ENCODE measurements at regions of chr1 and their contacts with region 1.

Region 1: GRCh38 chr1:74733604-74734484 is 892 bp downstream of the TYW3 start:
- DNase-seq: peak; percentile 49
- H3K4me3 ChIP-seq: peak overlapping the region; percentile 61 to 80
- H3K27ac ChIP-seq: peak overlapping the region; percentile 80 to 82
- H3K4me1 ChIP-seq: no peaks in the 10 kb centered on the region
- H3K27me3 ChIP-seq: no peaks in the 10 kb centered on the region
- CTCF ChIP-seq: peak in 3 of 4 experiments; percentile 59 to 74 (median 64)
- POLR2A ChIP-seq: no peak

Region 2: GRCh38 chr1:74197657-74198552 is 535.9 kb before region 1 on chr1 and contains the starts of genes FPGT and LRRIQ3:
- intact Hi-C with region 1: loop called (anchors 5 kb)
- DNase-seq: peak; percentile 87
- H3K4me3 ChIP-seq: peak within 1 kb of the TSS; percentile 49 to 52
- H3K27ac ChIP-seq: peak within 1 kb of the TSS; percentile 80
- H3K4me1 ChIP-seq: no peaks in the 10 kb centered on the region
- H3K27me3 ChIP-seq: no peaks in the 10 kb centered on the region
- CTCF ChIP-seq: peak in 1 of 4 experiments; percentile 11
- POLR2A ChIP-seq: peak; percentile 58
- total RNA-seq, gene FPGT: 8.9 to 10.9 TPM
- total RNA-seq, gene LRRIQ3: 0.68 to 5.7 TPM

Region 3: GRCh38 chr1:74517599-74518051 is 216.2 kb before region 1 on chr1:
- intact Hi-C with region 1: no loop called
- DNase-seq: no peak
- H3K4me3 ChIP-seq: no peak overlapping the region
- H3K27ac ChIP-seq: no peak overlapping the region
- H3K4me1 ChIP-seq: no peaks in the 10 kb centered on the region
- H3K27me3 ChIP-seq: no peaks in the 10 kb centered on the region
- CTCF ChIP-seq: no peak
- POLR2A ChIP-seq: no peak

Region 4: GRCh38 chr1:74712881-74713280 is 21.0 kb before region 1 on chr1:
- intact Hi-C with region 1: loop called (anchors 2 kb)
- DNase-seq: no peak
- H3K4me3 ChIP-seq: no peak overlapping the region
- H3K27ac ChIP-seq: peak overlapping the region; percentile 13 to 46
- H3K4me1 ChIP-seq: no peaks in the 10 kb centered on the region
- H3K27me3 ChIP-seq: no peaks in the 10 kb centered on the region
- CTCF ChIP-seq: no peak
- POLR2A ChIP-seq: no peak

Region 5: GRCh38 chr1:75234562-75234961 is 500.7 kb after region 1 on chr1:
- intact Hi-C with region 1: no loop called
- DNase-seq: no peak
- H3K4me3 ChIP-seq: no peak overlapping the region
- H3K27ac ChIP-seq: no peak overlapping the region
- H3K4me1 ChIP-seq: no peaks in the 10 kb centered on the region
- H3K27me3 ChIP-seq: no peaks in the 10 kb centered on the region
- CTCF ChIP-seq: no peak
- POLR2A ChIP-seq: no peak

Measured in prostate gland (tissue), 2 donors.